Activated naive CD8-positive, alpha-beta T cell treated with anti-CD3 and anti-CD28 coated beads, Interleukin-2, amount 10 ng/mL, durations not matched to agents 7 days and 5 days (primary cell): ENCODE measurements at regions of chr17 and their contacts with region 1.

Region 1: GRCh38 chr17:58631523-58632323 is 60.1 kb downstream of the TEX14 start:
- DNase-seq: peak; percentile 92
- ATAC-seq: peak; percentile 90
- H3K4me3 Mint-ChIP-seq: no peak overlapping the region
- H3K27ac Mint-ChIP-seq: no peak overlapping the region
- H3K4me1 Mint-ChIP-seq: peaks cover 10% of the 10 kb centered on the region
- H3K27me3 Mint-ChIP-seq: peaks cover 2% of the 10 kb centered on the region

Region 2: DNA sequence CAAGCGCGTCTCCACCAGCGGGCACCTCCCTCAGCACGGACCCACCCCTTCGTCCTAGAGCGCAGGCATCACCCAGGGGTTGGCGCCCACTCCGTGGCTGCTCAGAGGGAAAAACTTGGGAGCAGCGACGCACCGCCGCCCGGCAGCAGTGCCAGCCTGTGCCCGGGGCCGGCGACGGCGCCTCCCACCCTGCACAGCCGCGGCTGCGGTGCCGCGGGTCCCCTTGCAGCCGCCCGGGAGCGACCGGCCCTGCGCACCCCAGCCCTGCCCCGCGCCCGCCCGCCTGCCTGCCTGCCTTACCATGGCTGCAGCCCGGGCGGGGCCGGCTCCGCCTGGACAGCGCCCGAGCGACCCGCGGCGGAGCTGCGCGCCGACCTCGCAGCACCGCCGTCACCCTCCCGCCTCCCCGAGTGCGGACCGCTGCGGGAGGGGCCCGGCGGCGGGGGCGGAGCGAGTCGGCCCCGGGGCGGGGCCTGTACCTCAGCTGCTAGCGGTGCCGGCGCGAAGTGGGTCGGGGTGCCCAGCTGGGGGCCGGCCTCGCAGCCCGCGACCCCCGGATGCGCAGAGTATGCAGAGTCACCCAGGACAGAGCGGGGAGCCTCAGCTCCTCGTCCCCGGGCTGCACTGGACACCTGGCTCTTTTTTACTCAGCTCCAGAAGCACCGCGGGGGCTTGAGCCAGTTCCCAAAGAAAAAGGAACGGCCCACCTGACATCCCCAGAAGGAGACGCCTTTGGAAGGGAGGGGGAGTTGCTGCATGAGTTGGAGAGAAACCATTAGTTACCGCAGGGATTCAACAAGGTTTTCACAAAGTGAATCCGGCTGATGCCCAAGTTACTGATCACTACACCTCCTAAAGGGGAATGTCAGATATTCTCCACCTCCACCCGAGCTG is 99.8 kb before region 1 on chr17:
- POLR2A ChIA-PET with region 1: interaction called, 12 read pairs
- DNase-seq: peak; percentile 82
- ATAC-seq: peak; percentile 82
- H3K4me3 Mint-ChIP-seq: peak overlapping the region; percentile 51
- H3K27ac Mint-ChIP-seq: no peak overlapping the region
- H3K4me1 Mint-ChIP-seq: peaks cover 11% of the 10 kb centered on the region
- H3K27me3 Mint-ChIP-seq: peaks cover 47% of the 10 kb centered on the region

Region 3: DNA sequence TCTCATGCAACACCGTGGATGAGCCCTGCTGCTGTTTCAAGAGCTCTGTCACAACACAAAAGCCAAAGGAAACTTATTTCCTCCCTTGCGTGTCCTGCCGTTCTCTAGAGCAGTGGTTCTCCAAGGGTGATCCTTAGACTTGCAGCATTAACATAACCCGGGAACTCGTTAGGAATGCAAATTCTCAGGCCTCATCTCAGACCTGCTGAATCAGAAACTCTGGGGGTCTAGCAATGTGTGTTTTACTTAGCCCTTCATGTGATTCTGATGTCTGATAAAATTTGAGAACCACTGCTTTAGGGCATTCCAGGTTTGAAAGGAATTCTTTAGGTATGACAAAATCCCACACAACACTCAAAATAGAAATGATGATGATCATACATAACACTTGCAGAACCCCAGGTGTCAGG is 65.9 kb before region 1 on chr17:
- POLR2A ChIA-PET with region 1: no interaction called
- DNase-seq: no peak
- ATAC-seq: no peak
- H3K4me3 Mint-ChIP-seq: no peak overlapping the region
- H3K27ac Mint-ChIP-seq: no peak overlapping the region
- H3K4me1 Mint-ChIP-seq: peaks cover 3% of the 10 kb centered on the region
- H3K27me3 Mint-ChIP-seq: peaks cover 3% of the 10 kb centered on the region

Region 4: DNA sequence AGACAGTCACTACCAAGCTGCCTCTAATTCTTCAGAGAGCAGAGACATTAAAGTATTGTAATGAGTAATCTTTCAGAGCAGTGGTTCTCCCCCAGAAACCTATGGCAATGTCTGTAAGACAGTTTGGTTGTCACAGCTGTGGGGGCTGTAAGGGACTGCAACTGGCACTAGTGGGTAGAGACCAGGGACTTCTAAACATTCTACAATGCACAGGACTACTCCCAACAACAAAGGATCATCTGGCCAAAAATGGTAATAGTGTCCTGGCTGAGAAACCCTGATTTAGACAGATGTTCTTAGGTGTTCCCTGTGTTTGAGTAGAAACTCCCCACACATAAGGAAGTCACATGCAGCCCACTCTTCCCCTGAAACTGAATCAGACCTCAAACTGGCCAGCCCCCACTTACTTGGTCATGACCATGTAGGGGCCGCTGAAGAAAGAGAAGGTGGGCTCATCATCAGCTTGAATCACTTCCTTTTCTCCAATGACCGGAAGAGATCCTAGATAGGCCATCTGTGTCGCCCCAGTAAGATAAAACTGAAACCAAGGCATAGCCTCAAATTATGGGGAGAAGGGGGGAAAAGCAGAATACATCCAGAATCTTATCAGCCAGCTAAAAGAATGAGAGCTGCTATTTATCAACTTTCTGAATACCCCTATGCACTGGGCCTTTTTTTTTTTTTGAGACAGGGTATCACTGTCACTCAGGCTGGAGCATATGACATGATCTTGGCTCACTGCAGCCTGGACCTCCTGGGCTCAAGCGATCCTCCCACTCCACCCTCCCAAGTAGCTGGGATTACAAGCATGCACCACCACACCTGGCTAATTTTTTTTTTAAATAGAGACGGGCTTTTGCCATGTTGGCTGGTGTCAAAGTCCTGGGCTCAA is 15.7 kb before region 1 on chr17:
- POLR2A ChIA-PET with region 1: interaction called, 12 read pairs
- DNase-seq: no peak
- ATAC-seq: no peak
- H3K4me3 Mint-ChIP-seq: peak overlapping the region; percentile 15
- H3K27ac Mint-ChIP-seq: peak overlapping the region; percentile 63
- H3K4me1 Mint-ChIP-seq: peaks cover 11% of the 10 kb centered on the region
- H3K27me3 Mint-ChIP-seq: no peaks in the 10 kb centered on the region

Region 5: DNA sequence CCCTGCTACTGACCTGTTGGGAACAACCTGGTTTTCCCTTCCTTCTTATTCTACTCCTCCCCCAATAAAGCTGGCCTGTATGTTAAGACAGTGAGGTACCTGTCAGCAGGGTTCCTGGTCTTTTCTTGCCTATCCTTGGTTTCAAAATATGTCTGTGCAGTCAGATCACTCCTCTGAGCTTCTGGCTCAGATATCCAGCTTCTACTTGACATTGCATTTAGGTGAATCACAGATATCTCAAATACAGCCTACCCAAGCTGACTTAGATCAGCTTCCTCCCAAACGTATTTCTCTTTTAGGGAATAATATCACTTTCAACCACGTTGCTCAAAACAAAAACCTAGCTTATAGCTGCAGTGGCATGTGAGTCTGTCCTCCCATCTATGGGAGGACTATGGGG is 11.4 kb after region 1 on chr17:
- POLR2A ChIA-PET with region 1: interaction called, 21 read pairs
- DNase-seq: no peak
- ATAC-seq: no peak
- H3K4me3 Mint-ChIP-seq: no peak overlapping the region
- H3K27ac Mint-ChIP-seq: no peak overlapping the region
- H3K4me1 Mint-ChIP-seq: peaks cover 7% of the 10 kb centered on the region
- H3K27me3 Mint-ChIP-seq: no peaks in the 10 kb centered on the region

Region 6: DNA sequence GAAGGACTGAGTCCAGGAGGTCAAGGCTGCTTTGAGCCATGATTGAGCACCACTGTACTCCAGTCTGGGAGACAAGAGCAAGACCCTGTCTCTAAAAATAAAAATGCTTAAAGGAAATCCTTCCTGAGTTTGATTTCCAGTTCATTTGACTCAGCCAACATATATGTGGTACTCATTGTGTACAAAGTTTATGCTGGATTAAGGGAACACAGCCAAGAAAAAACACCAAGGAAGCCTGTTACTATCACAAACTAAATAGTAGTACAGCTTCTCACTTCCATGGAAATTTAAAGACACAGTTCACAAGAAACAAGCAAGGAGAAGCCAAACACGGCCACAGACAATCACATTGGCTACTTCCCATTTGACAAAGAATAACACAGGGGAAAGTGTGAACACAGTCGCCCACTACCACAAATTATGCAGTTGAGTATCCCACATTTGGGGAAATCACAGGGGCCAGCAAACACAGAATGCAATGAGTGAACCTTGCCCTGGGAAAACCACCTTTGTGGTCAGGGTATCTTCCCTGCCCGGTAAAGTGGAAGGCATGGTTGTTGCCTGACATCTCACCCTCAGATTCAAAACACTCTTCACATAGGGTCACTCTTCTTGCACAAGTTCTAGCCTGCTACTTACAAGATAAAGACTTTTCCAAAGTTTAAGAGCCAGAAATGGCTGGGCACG is 45.6 kb after region 1 on chr17:
- POLR2A ChIA-PET with region 1: no interaction called
- DNase-seq: no peak
- ATAC-seq: no peak
- H3K4me3 Mint-ChIP-seq: no peak overlapping the region
- H3K27ac Mint-ChIP-seq: no peak overlapping the region
- H3K4me1 Mint-ChIP-seq: no peaks in the 10 kb centered on the region
- H3K27me3 Mint-ChIP-seq: peaks cover 7% of the 10 kb centered on the region

Region 7: DNA sequence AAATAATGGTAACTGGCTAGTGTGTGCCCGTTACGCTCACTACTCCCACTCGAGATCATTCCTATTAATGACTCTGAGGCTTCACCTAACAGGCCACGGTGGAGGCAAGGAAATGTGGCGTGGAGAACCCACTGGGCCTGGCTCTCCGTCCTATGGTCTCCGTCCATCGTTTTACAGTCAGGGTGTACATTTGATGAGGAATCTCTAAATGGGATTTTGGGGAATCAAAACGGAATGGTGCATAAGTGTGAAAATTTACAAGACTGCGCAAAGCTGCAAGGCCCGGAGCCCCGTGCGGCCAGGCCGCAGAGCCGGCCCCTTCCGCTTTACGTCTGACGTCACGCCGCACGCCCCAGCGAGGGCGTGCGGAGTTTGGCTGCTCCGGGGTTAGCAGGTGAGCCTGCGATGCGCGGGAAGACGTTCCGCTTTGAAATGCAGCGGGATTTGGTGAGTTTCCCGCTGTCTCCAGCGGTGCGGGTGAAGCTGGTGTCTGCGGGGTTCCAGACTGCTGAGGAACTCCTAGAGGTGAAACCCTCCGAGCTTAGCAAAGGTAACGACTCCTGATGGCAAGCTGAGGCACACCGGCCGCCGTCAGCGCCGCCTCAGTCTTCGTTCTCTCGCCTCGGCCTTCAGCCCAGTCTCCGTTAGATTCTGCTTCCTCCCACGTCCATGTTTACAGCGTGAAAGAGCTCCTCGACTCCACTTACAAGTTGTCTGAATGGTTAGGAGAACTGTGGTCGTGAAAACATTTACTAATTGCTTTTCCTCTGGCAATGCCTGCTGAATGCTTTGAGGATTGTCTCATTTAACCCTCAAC is 60.7 kb after region 1 on chr17 and contains the start of gene RAD51C:
- POLR2A ChIA-PET with region 1: interaction called, 65 read pairs
- DNase-seq: peak; percentile 90
- ATAC-seq: peak; percentile 98
- H3K4me3 Mint-ChIP-seq: peak within 1 kb of the TSS; percentile 95
- H3K27ac Mint-ChIP-seq: peak within 1 kb of the TSS; percentile 96
- H3K4me1 Mint-ChIP-seq: peaks cover 24% of the 10 kb centered on the region
- H3K27me3 Mint-ChIP-seq: peaks cover 4% of the 10 kb centered on the region
- total RNA-seq, gene RAD51C: 40.0 to 45.7 TPM

Region 8: DNA sequence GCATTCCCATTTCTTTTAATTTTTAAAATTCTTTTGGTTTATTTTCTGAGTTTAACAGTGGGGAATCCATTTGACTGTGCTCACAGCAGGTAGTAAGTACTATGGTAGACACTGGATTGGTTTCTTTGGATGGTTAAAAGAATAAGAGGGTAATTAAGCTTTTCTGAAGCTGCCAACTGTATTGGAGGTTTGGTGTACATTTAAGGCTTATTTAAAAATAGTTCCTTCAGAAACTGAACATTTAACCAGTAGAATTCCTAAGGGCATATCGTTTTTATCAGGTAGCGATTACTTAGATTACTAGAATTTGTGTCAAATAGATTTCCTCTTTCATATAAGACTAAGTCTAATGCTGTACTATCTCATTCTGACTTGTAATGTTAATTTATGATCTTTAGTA is 286.3 kb after region 1 on chr17:
- POLR2A ChIA-PET with region 1: no interaction called
- DNase-seq: no peak
- ATAC-seq: no peak
- H3K4me3 Mint-ChIP-seq: no peak overlapping the region
- H3K27ac Mint-ChIP-seq: no peak overlapping the region
- H3K4me1 Mint-ChIP-seq: peaks cover 5% of the 10 kb centered on the region
- H3K27me3 Mint-ChIP-seq: peaks cover 4% of the 10 kb centered on the region